MCF 10A (cell line): ENCODE measurements at regions of chr20 and their contacts with region 1.

Region 1: GRCh38 chr20:13898011-13898612 is 92.3 kb downstream of the SEL1L2 start:
- DNase-seq: peak; percentile 20
- H3K4me3 Mint-ChIP-seq: no peak overlapping the region
- H3K27ac Mint-ChIP-seq: no peak overlapping the region
- H3K4me1 Mint-ChIP-seq: no peaks in the 10 kb centered on the region
- H3K27me3 Mint-ChIP-seq: no peaks in the 10 kb centered on the region
- CTCF ChIP-seq: no peak

Region 2: GRCh38 chr20:13809373-13809772 is 88.7 kb before region 1 on chr20:
- CTCF ChIA-PET with region 1: no interaction called
- POLR2A ChIA-PET with region 1: no interaction called
- intact Hi-C with region 1: no loop called
- DNase-seq: no peak
- H3K4me3 Mint-ChIP-seq: no peak overlapping the region
- H3K27ac Mint-ChIP-seq: no peak overlapping the region
- H3K4me1 Mint-ChIP-seq: no peaks in the 10 kb centered on the region
- H3K27me3 Mint-ChIP-seq: no peaks in the 10 kb centered on the region
- CTCF ChIP-seq: no peak

Region 3: DNA sequence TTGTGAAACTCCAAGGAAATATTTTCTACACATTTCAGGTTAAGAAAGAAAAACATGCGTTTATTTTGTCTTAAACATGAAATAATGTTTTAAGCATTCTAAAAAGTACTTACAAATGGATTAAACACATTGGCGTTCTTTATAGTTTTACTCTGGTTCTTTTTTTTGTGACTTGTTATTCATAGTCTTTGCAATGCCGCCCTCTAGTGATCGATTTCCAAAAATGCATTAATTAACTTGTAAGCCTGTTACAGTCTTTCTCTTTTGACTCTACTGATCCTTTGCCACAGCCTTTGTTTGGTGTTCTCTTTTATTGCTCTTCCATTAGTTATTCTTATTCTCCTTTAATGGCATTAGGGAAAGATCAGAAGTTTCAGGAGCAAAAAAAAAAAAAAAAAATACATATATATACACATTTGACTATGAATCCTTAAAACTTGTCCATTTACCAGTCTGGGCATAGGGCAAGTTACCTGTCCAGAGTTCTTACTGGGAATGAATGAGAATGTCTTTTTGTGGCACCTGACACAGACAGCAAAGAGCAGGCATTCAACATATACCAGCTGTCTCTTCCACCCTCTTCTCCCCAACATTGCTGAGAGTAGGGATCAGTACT is 157.1 kb after region 1 on chr20:
- CTCF ChIA-PET with region 1: interaction called, 4 read pairs
- POLR2A ChIA-PET with region 1: no interaction called
- intact Hi-C with region 1: loop called (anchors 1 kb)
- DNase-seq: peak; percentile 79
- H3K4me3 Mint-ChIP-seq: no peak overlapping the region
- H3K27ac Mint-ChIP-seq: no peak overlapping the region
- H3K4me1 Mint-ChIP-seq: no peaks in the 10 kb centered on the region
- H3K27me3 Mint-ChIP-seq: no peaks in the 10 kb centered on the region
- CTCF ChIP-seq: peak; percentile 50